Prostate gland (tissue), 2 donors: ENCODE measurements at regions of chr7 and their contacts with region 1.

Region 1: DNA sequence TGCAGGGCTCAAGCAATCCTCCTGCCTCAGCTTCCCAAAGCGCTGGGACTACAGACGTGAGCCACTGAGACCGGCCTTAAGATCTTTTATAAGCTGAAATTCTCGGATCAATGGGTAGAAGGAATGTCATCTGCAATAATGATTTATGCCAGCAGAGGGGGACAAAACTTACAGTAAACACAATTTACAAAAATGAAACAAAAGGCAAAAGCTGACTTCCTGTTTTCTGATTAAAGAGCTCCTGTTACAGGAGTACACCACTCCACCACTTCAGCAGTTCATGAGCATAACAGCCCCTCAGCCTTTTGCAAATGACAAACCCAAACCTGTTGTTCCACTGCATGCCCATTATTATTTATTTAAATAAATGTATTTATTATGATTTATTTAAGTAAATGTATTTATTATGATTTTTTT is 88.5 kb upstream of the ATP6V0A4 start:
- DNase-seq: peak; percentile 33
- H3K4me3 ChIP-seq: no peak overlapping the region
- H3K27ac ChIP-seq: no peak overlapping the region
- H3K4me1 ChIP-seq: no peaks in the 10 kb centered on the region
- H3K27me3 ChIP-seq: no peaks in the 10 kb centered on the region
- CTCF ChIP-seq: peak in 3 of 4 experiments; percentile 64 to 78 (median 65)
- POLR2A ChIP-seq: no peak

Region 2: DNA sequence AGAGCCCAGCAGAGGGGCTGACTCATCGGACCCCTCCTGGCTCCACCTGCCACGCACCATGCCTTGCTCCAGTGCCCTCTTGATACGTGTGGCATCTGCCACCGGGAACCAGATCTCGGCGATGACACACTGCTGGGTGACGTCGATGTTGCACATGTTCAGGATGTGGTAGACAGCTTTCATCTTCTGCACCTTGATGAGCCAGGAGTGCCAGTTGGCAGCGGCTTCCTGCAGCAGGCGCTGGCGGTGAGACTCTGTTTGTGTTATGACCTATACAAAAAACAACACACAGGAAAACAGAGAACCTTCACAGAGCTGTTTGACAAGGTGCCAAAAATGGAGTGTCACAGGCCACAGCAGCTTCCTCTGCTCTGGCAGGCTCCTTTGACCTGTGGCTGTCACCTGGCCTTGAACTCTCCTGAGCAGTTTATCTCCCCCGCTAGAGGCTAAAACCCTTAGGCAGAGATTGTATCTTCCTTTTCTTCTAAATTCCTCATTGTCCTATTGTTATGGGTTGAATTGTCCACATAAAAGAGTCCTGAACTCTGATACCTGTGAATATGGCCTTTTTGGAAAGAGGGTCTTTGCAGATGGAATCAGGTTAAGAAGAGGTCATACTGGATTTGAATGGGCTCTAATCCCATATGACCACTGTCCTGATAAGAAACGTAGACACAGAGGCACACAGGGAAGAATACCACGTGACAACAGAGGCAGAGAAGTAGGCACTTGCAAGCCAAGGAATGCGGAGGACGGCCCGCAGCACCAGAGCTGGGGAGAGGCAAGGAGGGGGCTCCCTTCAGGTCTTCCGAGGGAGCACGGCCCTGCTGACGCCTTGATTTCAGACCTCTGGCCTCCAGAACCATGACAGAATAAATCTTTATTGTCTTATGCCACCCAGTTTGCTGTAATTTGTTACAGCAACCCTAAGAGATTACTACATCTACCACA is 133.7 kb before region 1 on chr7:
- intact Hi-C with region 1: no loop called
- DNase-seq: peak; percentile 11
- H3K4me3 ChIP-seq: no peak overlapping the region
- H3K27ac ChIP-seq: no peak overlapping the region
- H3K4me1 ChIP-seq: no peaks in the 10 kb centered on the region
- H3K27me3 ChIP-seq: no peaks in the 10 kb centered on the region
- CTCF ChIP-seq: no peak
- POLR2A ChIP-seq: no peak

Region 3: GRCh38 chr7:138814806-138815332 is 71.6 kb before region 1 on chr7:
- intact Hi-C with region 1: no loop called
- DNase-seq: no peak
- H3K4me3 ChIP-seq: no peak overlapping the region
- H3K27ac ChIP-seq: no peak overlapping the region
- H3K4me1 ChIP-seq: no peaks in the 10 kb centered on the region
- H3K27me3 ChIP-seq: no peaks in the 10 kb centered on the region
- CTCF ChIP-seq: no peak
- POLR2A ChIP-seq: no peak

Region 4: DNA sequence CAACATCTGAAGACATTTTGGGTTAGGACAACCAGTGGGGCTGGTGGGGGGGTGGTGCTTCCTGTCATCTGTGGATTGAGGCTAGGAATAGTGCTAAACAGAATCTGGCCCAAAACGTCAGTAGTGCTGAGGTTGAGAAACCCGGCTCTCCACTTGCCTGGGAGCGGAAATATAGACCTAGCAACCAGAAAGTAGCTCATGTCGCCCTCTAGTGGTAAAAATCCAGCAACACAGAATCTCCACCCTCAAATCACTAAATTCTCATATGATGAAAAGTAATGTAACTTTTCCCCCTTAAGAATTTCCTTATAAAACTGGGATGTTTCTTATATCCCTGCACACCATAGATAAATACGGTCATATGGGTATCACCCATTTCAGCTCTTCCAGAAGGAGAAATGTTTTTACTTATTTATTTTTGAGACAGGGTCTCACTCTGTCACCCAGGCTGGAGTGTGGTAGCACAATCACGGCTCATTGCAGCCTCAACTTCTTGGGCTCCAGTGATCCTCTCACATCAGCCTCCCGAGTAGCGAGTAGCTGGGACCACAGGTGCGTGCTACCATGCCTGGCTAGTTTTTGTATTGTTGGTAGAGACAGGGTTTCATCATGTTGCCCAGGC is 188.6 kb after region 1 on chr7:
- intact Hi-C with region 1: loop called (anchors 5 kb)
- DNase-seq: peak; percentile 75
- H3K4me3 ChIP-seq: no peak overlapping the region
- H3K27ac ChIP-seq: peak overlapping the region in 1 of 2 donors; percentile 45
- H3K4me1 ChIP-seq: no peaks in the 10 kb centered on the region
- H3K27me3 ChIP-seq: no peaks in the 10 kb centered on the region
- CTCF ChIP-seq: peak; percentile 73 to 92 (median 78)
- POLR2A ChIP-seq: no peak